MCF 10A (cell line): ENCODE measurements at regions of chr11 and their contacts with region 1.

Region 1: DNA sequence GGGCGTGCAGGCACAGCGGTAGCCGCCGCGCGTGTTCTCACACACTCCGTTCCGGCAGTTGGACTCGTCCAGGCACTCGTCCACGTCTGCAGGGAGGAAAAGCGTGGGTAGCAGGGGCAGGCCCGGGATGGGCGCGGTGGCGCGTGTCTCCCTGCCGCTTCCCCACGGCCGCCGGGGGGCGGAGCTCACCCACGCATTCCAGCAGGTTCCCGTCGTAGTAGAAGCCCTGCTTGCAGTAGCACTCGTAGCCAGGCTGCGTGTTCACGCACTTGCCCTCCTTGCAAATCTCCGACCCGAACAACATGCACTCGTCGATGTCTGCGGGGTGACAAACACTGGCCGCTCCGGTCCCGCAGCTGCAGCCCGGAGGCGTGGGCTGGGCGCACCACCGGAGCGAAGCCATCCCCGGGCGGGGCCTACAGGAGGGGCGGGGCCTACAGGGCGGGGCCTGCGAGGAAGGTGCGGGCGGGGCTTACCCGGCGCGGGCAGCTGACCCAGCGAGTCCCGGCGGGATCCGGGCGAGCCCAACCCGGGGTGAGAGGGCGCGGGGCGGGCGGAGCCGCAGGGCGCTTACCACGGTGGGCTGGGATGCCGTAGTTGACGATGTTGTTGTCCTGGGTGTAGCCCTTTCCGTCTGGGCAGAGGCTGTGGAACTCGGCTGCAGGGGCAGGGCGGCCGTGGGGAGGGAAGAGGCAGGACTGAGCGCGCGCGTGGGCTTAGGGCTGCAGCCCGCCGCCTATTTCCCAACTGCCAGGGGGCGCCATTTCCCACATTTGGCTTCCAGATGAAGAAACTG is 15.6 kb downstream of the SCYL1 start:
- DNase-seq: peak; percentile 87
- H3K4me3 Mint-ChIP-seq: peak overlapping the region; percentile 79
- H3K27ac Mint-ChIP-seq: peak overlapping the region; percentile 23
- H3K4me1 Mint-ChIP-seq: peaks cover 6% of the 10 kb centered on the region
- H3K27me3 Mint-ChIP-seq: no peaks in the 10 kb centered on the region
- CTCF ChIP-seq: peak; percentile 92

Region 2: GRCh38 chr11:65169164-65169641 is 371.3 kb before region 1 on chr11:
- CTCF ChIA-PET with region 1: no interaction called
- POLR2A ChIA-PET with region 1: no interaction called
- intact Hi-C with region 1: no loop called
- DNase-seq: no peak
- H3K4me3 Mint-ChIP-seq: no peak overlapping the region
- H3K27ac Mint-ChIP-seq: no peak overlapping the region
- H3K4me1 Mint-ChIP-seq: no peaks in the 10 kb centered on the region
- H3K27me3 Mint-ChIP-seq: no peaks in the 10 kb centered on the region
- CTCF ChIP-seq: no peak

Region 3: GRCh38 chr11:65530157-65530496 is 10.4 kb before region 1 on chr11:
- CTCF ChIA-PET with region 1: interaction called, 26 read pairs
- POLR2A ChIA-PET with region 1: interaction called, 10 read pairs
- intact Hi-C with region 1: no loop called
- DNase-seq: no peak
- H3K4me3 Mint-ChIP-seq: no peak overlapping the region
- H3K27ac Mint-ChIP-seq: no peak overlapping the region
- H3K4me1 Mint-ChIP-seq: peaks cover 4% of the 10 kb centered on the region
- H3K27me3 Mint-ChIP-seq: no peaks in the 10 kb centered on the region
- CTCF ChIP-seq: no peak

Region 4: GRCh38 chr11:65558002-65558931 is 17.8 kb after region 1 on chr11 and contains the start of gene LTBP3:
- CTCF ChIA-PET with region 1: interaction called, 18 read pairs
- POLR2A ChIA-PET with region 1: interaction called, 23 read pairs
- intact Hi-C with region 1: loop called (anchors 2 kb)
- DNase-seq: peak; percentile 87
- H3K4me3 Mint-ChIP-seq: peak within 1 kb of the TSS; percentile 66
- H3K27ac Mint-ChIP-seq: no peak within 1 kb of the TSS
- H3K4me1 Mint-ChIP-seq: peaks cover 47% of the 10 kb centered on the region
- H3K27me3 Mint-ChIP-seq: no peaks in the 10 kb centered on the region
- CTCF ChIP-seq: no peak
- total RNA-seq, gene LTBP3: 10.6 and 11.0 TPM in 2 replicates

Region 5: DNA sequence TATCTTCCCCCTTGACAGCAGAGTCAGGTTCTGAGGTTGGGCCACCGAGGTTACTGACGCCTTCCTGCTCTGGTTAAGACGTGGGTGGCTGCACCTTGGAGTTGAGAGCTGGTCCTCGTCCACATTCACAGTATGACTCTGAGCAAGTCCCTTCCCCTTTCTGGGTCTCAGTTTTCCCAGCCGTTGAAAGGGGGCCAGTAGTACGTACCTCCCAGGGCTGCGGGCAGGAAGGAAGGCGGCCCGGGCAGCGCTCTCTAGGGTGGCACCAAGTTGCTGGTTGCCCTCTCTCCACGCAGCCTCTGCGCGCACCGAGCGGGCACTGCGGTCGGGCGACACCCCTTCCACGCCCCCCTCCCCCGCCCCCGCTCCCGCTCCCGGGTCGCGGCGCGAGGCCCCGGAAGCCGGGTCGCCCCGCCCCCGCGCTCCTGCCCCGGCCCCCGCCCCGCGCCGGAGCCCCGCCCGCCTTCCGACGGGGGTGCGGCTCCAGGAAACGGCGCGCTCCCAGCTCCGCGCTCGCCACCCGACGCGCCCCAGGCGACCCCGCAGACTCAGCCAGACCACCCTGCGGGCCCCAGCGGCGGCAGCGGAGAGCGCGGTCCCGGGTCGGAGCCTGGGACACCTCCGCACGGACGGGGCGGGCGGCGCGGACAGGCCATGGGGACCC is 35.2 kb after region 1 on chr11 and contains the start of gene EHBP1L1:
- CTCF ChIA-PET with region 1: interaction called, 51 read pairs
- POLR2A ChIA-PET with region 1: interaction called, 75 read pairs
- intact Hi-C with region 1: loop called (anchors 1 kb)
- DNase-seq: peak; percentile 65
- H3K4me3 Mint-ChIP-seq: peak within 1 kb of the TSS; percentile 97
- H3K27ac Mint-ChIP-seq: peak within 1 kb of the TSS; percentile 90
- H3K4me1 Mint-ChIP-seq: peaks cover 40% of the 10 kb centered on the region
- H3K27me3 Mint-ChIP-seq: no peaks in the 10 kb centered on the region
- CTCF ChIP-seq: no peak
- total RNA-seq, gene EHBP1L1: 31.3 and 40.6 TPM in 2 replicates

Region 6: DNA sequence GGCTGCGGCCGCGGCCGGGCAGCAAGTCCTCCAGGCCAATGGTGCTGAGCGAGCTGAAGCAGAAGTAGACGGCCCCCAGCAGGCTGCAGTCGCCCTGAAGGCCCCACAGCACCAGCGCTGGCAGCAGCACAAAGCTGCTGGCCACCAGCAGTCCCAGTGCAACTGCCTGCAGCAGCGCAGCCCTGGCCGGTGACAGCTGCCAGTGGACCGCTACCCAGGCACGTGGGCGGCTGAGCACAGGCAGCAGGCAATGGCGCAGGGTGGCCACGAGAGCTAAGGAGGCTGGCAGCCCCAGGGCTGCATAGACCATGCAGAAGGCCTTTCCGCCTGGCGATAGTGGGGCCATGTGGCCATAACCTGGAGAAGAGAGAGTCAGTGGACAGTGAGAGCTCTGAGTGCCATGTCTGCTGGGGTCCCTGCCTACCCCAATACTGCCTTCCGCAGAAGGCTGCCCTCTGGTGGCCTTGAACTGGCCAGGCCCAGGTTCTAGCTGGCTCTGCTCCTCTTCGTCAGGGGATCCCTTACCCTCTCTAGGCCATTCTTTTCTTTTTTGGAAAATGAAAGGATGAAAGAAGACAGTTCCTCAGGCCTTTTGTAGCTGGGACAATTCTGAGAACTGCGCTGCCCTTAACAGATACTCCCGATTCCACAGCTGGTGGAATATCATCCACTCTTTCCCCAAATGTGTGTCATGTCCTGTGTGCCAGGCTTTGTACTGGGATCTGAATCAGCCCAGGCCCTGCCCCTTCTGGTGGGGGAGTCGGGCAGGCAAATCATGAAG is 53.2 kb after region 1 on chr11:
- CTCF ChIA-PET with region 1: interaction called, 25 read pairs
- POLR2A ChIA-PET with region 1: interaction called, 7 read pairs
- intact Hi-C with region 1: loop called (anchors 1 kb)
- DNase-seq: no peak
- H3K4me3 Mint-ChIP-seq: no peak overlapping the region
- H3K27ac Mint-ChIP-seq: no peak overlapping the region
- H3K4me1 Mint-ChIP-seq: peaks cover 5% of the 10 kb centered on the region
- H3K27me3 Mint-ChIP-seq: no peaks in the 10 kb centered on the region
- CTCF ChIP-seq: peak; percentile 56

Region 7: GRCh38 chr11:65802841-65803240 is 262.3 kb after region 1 on chr11:
- CTCF ChIA-PET with region 1: no interaction called
- POLR2A ChIA-PET with region 1: no interaction called
- intact Hi-C with region 1: no loop called
- DNase-seq: no peak
- H3K4me3 Mint-ChIP-seq: no peak overlapping the region
- H3K27ac Mint-ChIP-seq: no peak overlapping the region
- H3K4me1 Mint-ChIP-seq: no peaks in the 10 kb centered on the region
- H3K27me3 Mint-ChIP-seq: no peaks in the 10 kb centered on the region
- CTCF ChIP-seq: no peak